Panc1 (cell line): ENCODE measurements at regions of chr1 and their contacts with region 1.

Region 1: DNA sequence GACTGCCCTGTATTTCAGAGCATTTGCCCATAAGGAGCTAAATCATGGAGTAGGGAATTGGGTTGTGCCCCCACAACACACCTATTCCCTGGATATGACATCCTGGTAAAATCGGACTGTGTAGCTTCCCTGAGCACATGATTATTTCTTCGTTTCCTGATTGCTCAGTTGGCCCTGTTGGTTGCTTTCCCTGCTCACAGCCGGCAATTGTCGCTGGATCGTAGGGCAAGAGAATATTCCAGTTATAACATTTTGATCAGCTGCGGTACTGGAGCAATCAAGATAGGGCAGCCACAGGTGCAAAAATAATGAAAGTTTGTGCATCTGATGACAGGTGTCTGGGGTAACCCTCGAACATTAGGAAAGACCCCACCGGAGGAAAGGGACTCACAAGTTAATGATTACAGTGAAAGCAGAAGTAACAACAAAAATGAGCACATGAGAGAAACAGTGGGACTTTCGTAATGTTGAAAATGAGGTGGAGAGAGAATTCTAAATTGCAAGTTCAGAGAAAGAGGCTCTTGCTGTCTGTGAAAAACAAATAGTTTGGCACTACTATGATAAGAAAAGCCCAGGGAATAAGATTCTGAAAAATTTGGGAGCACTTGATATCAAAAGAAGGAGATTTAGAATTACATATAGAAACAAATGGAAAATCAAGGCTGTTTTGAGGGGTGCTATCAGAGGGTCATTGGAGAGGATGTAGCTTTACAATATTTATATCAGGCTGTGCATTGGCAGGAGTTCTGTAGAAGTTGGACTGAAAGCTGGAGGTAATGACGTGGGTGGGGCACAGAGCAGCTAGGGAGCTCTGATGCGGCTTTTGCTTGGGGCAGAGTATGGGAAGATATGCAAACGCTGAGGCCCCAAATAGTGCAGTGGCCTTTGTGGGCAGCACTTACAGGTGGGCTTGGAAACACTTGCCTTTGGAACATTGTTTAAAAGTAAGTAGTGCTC is at the start of gene MAB21L3:
- DNase-seq: no peak
- ATAC-seq: no peak
- H3K4me3 ChIP-seq: no peak within 1 kb of the TSS
- H3K27ac ChIP-seq: no peak within 1 kb of the TSS
- H3K4me1 ChIP-seq: no peaks in the 10 kb centered on the region
- H3K27me3 ChIP-seq: no peaks in the 10 kb centered on the region
- CTCF ChIP-seq: no peak
- total RNA-seq, gene MAB21L3: not detected

Region 2: DNA sequence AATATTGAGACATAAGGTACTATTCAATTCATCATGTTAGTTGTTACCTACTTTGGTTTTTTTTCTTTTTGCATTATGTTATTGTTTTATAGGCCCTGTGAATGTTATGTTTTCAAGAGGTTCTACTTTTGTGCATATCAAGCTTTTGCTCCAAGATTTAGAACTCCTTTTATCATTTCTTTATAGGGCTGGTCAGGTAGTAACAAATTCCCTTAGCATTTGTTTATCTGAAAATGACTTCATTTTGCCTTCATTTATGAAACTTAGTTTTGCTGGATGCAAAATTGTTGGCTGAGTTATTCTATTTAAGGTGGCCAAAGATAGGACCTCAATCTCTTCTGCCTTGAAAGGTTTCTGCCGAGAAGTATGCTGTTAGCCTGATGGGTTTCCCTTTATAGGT is 21.0 kb before region 1 on chr1:
- CTCF ChIA-PET with region 1: no interaction called
- POLR2A ChIA-PET with region 1: interaction called, 10 read pairs
- in situ Hi-C with region 1: no loop called
- intact Hi-C with region 1: no loop called
- DNase-seq: no peak
- ATAC-seq: no peak
- H3K4me3 ChIP-seq: no peak overlapping the region
- H3K27ac ChIP-seq: no peak overlapping the region
- H3K4me1 ChIP-seq: no peaks in the 10 kb centered on the region
- H3K27me3 ChIP-seq: no peaks in the 10 kb centered on the region
- CTCF ChIP-seq: no peak

Region 3: GRCh38 chr1:116122955-116123757 is 12.3 kb after region 1 on chr1:
- CTCF ChIA-PET with region 1: no interaction called
- POLR2A ChIA-PET with region 1: no interaction called
- in situ Hi-C with region 1: no loop called
- intact Hi-C with region 1: no loop called
- DNase-seq: no peak
- ATAC-seq: no peak
- H3K4me3 ChIP-seq: no peak overlapping the region
- H3K27ac ChIP-seq: no peak overlapping the region
- H3K4me1 ChIP-seq: no peaks in the 10 kb centered on the region
- H3K27me3 ChIP-seq: no peaks in the 10 kb centered on the region
- CTCF ChIP-seq: no peak

Region 4: GRCh38 chr1:116360429-116361173 is 249.8 kb after region 1 on chr1:
- CTCF ChIA-PET with region 1: no interaction called
- POLR2A ChIA-PET with region 1: no interaction called
- in situ Hi-C with region 1: no loop called
- intact Hi-C with region 1: no loop called
- DNase-seq: no peak
- ATAC-seq: no peak
- H3K4me3 ChIP-seq: no peak overlapping the region
- H3K27ac ChIP-seq: no peak overlapping the region
- H3K4me1 ChIP-seq: no peaks in the 10 kb centered on the region
- H3K27me3 ChIP-seq: no peaks in the 10 kb centered on the region
- CTCF ChIP-seq: peak; percentile 12; the same call in 1 of the 2 replicates